Activated T-helper 1 cell treated with anti-CD3 and anti-CD28 coated beads, Interleukin-12 subunit alpha, Interleukin-12 subunit beta, Interleukin-2, Interleukin-4 antibody, amounts not matched to agents 30 ng/mL and 10 ng/mL and 1 ng/mL, durations not matched to agents 14 hours and 24 hours and 36 hours (primary cell): ENCODE measurements at regions of chr2 and their contacts with region 1.

Region 1: GRCh38 chr2:27703638-27704341 is 40.1 kb downstream of the SLC4A1AP start:
- DNase-seq: peak; percentile 74
- H3K4me3 Mint-ChIP-seq: no peak overlapping the region
- H3K27ac Mint-ChIP-seq: no peak overlapping the region
- H3K4me1 Mint-ChIP-seq: peaks cover 15% of the 10 kb centered on the region
- H3K27me3 Mint-ChIP-seq: no peaks in the 10 kb centered on the region

Region 2: DNA sequence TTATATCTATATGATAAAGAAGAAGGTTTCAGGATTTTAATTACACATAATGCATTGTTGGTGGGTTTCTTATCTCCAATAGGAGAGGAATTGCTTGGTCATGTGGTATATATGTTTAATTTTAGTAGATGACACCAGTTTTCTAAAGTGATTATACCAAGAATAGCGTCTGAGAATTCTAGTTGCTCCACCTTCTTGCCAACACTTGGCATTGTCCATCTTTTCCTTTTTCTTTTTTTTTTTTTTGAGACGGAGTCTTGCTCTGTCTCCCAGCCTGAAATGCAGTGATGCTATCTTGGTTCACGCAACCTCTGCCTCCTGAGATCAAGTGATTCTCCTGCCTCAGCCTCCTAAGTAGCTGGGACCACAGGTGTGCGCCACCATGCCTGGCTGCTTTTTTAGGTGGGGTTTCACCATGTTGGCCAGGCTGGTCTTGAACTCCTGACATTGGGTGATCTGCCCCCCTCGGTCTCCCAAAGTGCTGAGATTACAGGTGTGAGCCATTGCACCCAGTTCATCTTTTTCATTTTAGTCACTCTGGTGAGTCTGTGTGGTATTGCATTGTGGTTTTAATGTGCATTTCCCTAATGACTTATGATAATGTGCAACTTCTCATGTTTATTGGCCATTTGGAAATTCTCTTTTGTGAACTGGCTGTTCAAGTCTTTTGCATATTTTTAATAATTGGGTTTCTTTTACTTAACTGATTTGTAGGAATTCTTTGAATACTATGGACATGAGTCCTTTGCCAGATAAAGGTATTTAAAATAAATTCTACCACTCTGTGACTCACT is 158.2 kb before region 1 on chr2:
- intact Hi-C with region 1: no loop called
- DNase-seq: no peak
- H3K4me3 Mint-ChIP-seq: no peak overlapping the region
- H3K27ac Mint-ChIP-seq: no peak overlapping the region
- H3K4me1 Mint-ChIP-seq: no peaks in the 10 kb centered on the region
- H3K27me3 Mint-ChIP-seq: peaks cover 5% of the 10 kb centered on the region

Region 3: GRCh38 chr2:27717070-27717795 is 13.4 kb after region 1 on chr2:
- intact Hi-C with region 1: loop called (anchors 1 kb)
- DNase-seq: no peak
- H3K4me3 Mint-ChIP-seq: peak overlapping the region; percentile 66
- H3K27ac Mint-ChIP-seq: peak overlapping the region; percentile 20
- H3K4me1 Mint-ChIP-seq: peaks cover 50% of the 10 kb centered on the region
- H3K27me3 Mint-ChIP-seq: no peaks in the 10 kb centered on the region

Region 4: GRCh38 chr2:27754138-27754588 is 50.4 kb after region 1 on chr2:
- intact Hi-C with region 1: loop called (anchors 1 kb)
- DNase-seq: peak; percentile 62
- H3K4me3 Mint-ChIP-seq: no peak overlapping the region
- H3K27ac Mint-ChIP-seq: no peak overlapping the region
- H3K4me1 Mint-ChIP-seq: no peaks in the 10 kb centered on the region
- H3K27me3 Mint-ChIP-seq: peaks cover 4% of the 10 kb centered on the region